AG04449 (cell line): ENCODE measurements at regions of chr12 and their contacts with region 1.

Region 1: DNA sequence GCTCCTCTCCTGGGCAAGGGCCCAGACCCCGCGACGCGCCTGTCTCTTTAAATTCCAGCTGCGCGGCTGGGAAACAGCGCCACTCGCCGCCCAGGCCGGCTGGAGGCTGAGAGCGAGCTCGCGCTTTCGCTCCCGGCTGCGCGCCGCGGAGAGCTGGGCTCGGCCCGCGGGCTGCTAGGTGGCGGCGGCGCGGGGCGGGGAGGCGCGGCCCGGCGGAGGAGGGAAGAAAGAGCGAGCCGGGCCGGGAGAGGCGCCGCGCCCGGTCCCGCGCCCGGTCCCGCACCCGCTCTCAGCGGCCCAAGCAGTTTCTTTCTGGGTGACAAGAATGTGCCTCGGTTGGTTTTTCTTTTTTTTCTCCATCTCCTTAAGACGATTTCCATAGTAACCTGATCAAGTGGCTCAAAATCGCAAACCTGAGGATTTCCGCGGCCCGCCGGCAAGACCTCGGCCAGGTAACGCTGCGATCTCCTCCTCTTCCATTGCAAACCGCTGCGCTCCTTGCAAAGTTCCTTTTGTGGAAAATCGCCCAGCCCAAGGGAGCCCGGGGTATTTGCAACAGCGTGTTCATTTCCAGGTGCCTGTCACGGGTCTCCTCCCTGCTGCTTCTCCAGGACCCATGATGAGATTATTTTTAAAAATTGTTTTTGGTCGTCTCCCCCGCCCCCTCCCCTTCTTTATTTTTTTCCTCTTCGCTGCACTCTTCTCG is 259.5 kb upstream of the E2F7 start:
- DNase-seq: no peak
- H3K4me3 ChIP-seq: peak overlapping the region; percentile 73
- CTCF ChIP-seq: peak; percentile 80

Region 2: GRCh38 chr12:77308056-77308455 is 16.9 kb before region 1 on chr12:
- CTCF ChIA-PET with region 1: interaction called, 33 read pairs
- POLR2A ChIA-PET with region 1: no interaction called
- DNase-seq: no peak
- H3K4me3 ChIP-seq: no peak overlapping the region
- CTCF ChIP-seq: no peak

Region 3: DNA sequence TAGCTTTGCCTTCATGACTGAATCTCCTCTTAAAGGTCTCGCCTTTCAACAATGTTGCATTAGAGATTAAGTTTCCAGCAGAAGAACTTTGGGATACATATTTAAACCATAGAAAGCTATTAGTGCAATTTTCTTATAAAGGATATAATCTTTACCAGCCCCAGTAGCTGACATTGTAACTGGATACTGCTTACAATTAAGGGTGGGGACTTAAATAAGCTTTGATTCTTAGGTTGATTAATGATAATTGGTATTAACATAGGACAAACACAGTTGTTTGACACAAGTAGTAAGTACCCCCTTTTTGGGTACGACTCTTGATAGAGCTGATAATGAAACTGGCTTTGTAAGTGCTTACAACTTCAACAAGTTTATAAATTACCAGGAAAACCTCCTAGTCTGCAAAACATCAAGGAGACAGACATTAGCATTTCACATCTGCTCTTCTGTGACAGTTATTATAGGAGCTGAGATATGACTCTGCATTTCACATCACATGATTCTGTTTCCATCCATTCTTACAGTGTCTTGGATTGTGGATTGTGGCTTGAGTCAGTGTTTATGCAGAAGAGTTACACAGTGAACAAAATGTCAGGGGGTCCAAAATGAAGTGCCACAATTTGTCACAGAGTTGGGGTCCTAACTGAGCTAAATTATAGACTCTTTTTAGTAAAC is 10.4 kb before region 1 on chr12:
- CTCF ChIA-PET with region 1: interaction called, 33 read pairs
- POLR2A ChIA-PET with region 1: interaction called, 3 read pairs
- DNase-seq: no peak
- H3K4me3 ChIP-seq: no peak overlapping the region
- CTCF ChIP-seq: no peak

Region 4: DNA sequence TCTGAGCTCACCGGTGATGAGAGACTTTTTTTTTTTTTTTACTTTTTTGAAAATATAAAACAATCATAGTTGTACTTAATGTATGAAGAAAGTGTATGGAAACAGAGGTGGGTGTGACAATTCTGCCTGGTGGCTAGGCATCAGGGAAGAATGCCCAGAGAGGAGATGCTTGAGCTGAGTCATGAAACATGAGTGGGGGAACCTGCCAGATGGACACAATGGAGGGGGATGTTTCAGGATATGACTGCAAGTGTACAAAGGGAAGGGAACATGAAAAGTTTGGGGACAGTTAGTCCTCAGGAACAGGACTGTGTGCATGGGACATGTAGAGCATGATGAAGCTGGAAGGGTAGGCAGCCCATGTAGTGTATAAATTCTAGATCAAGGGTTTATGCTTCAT is 14.7 kb after region 1 on chr12:
- CTCF ChIA-PET with region 1: interaction called, 12 read pairs
- POLR2A ChIA-PET with region 1: interaction called, 3 read pairs
- DNase-seq: no peak
- H3K4me3 ChIP-seq: no peak overlapping the region
- CTCF ChIP-seq: no peak

Region 5: GRCh38 chr12:77685112-77685511 is 360.2 kb after region 1 on chr12:
- CTCF ChIA-PET with region 1: interaction called, 20 read pairs
- POLR2A ChIA-PET with region 1: no interaction called
- DNase-seq: peak; percentile 49
- H3K4me3 ChIP-seq: no peak overlapping the region
- CTCF ChIP-seq: peak; percentile 69